H1 (cell line): ENCODE measurements at regions of chr1 and their contacts with region 1.

Region 1: GRCh38 chr1:43199064-43199726 is 27.1 kb downstream of the CFAP57 start:
- DNase-seq: no peak
- H3K4me3 ChIP-seq: no peak overlapping the region
- H3K27ac ChIP-seq: no peak overlapping the region
- H3K4me1 ChIP-seq: no peaks in the 10 kb centered on the region
- H3K27me3 ChIP-seq: no peaks in the 10 kb centered on the region; a peak in 1 of 7 replicates
- CTCF ChIP-seq: no peak
- EP300 ChIP-seq: no peak
- POLR2A ChIP-seq: no peak
- RAD21 ChIP-seq: no peak

Region 2: DNA sequence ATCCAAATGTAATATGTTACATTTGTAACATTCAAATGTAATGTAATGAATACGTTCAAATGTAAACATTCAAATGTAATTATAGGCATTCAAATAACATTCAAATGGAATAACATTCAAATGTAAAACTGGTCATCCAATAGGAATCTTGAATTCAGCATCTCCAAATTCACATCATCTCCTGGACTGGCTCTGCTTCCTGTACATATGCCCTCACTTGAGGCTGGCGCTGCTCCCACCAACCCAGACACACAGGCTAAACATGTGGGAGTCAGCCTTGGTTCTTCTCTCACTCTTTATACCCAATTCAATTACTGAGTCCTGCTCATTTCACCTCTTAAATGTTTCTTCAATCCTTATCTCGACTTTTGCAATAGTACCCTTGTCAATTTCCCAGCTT is 34.0 kb before region 1 on chr1:
- CTCF ChIA-PET with region 1: no interaction called
- POLR2A ChIA-PET with region 1: no interaction called
- DNase-seq: no peak
- H3K4me3 ChIP-seq: no peak overlapping the region
- H3K27ac ChIP-seq: no peak overlapping the region
- H3K4me1 ChIP-seq: no peaks in the 10 kb centered on the region
- H3K27me3 ChIP-seq: no peaks in the 10 kb centered on the region
- CTCF ChIP-seq: no peak
- EP300 ChIP-seq: no peak
- POLR2A ChIP-seq: no peak
- RAD21 ChIP-seq: no peak

Region 3: DNA sequence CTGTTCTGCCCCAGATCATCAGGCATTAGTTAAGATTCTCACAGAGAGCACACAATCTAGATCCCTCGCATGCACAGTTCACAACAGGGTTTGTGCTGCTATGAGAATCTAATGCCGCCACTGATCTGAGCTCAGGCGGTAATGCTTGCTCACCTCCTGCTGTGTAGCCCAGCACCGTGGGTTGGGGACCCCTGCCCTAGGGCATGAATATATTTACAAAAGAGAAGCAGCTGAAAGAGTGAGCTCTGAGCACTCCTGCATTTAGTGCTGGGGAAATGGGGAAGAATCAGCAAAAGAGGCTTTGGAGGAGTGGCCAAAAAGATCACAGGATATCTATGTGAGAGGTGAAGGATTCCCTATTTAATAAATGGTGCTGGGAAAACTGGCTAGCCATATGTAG is 21.5 kb before region 1 on chr1:
- CTCF ChIA-PET with region 1: interaction called, 10 read pairs
- POLR2A ChIA-PET with region 1: no interaction called
- DNase-seq: no peak
- H3K4me3 ChIP-seq: no peak overlapping the region
- H3K27ac ChIP-seq: no peak overlapping the region
- H3K4me1 ChIP-seq: peaks cover 1 to 10% (median 9%) of the 10 kb centered on the region in 4 experiments; a peak in 6 of 7 replicates
- H3K27me3 ChIP-seq: peaks cover 0 to 2% (median 0%) of the 10 kb centered on the region in 4 experiments; a peak in 2 of 7 replicates
- CTCF ChIP-seq: no peak
- EP300 ChIP-seq: no peak
- POLR2A ChIP-seq: no peak
- RAD21 ChIP-seq: no peak

Region 4: DNA sequence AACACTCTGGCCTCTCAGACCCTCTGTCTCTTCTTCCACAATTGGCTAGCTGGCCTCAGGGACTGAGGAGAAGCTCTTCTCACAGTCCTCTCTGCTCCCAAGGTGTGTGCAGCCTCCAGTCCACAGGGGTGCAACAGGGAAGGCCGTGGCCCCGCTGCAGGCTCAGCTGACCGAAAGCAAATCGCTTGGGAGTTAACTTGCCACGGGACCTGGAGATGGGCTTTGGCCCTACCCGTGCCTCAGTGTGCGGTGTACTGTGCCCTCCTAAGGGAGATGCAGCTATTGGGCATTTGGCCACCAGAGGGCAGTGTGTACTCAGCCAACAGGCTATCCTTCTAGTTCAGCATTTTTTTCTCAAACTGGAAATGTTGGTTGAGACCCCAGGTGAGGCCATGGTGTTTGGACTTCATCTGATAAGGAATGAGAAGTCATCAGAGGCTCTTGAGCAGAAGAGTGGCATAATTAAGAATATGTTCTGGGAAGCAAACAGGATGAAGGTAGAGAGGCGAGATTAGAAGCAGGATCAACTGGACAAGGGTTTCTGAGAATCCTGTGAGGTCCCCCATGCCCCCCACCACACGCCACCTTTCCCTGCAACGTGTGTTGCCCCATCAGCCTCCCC is 28.1 kb after region 1 on chr1:
- CTCF ChIA-PET with region 1: interaction called, 10 read pairs
- POLR2A ChIA-PET with region 1: no interaction called
- DNase-seq: peak; percentile 80 to 98
- H3K4me3 ChIP-seq: no peak overlapping the region
- H3K27ac ChIP-seq: no peak overlapping the region
- H3K4me1 ChIP-seq: peaks cover 0 to 5% (median 3%) of the 10 kb centered on the region in 4 experiments; a peak in 3 of 7 replicates
- H3K27me3 ChIP-seq: no peaks in the 10 kb centered on the region
- CTCF ChIP-seq: peak; percentile 89 to 99 (median 93)
- EP300 ChIP-seq: no peak
- POLR2A ChIP-seq: no peak
- RAD21 ChIP-seq: peak; percentile 99 to 100